Cardiac septum (tissue), 1 donor: ENCODE measurements at regions of chr15 and their contacts with region 1.

Region 1: DNA sequence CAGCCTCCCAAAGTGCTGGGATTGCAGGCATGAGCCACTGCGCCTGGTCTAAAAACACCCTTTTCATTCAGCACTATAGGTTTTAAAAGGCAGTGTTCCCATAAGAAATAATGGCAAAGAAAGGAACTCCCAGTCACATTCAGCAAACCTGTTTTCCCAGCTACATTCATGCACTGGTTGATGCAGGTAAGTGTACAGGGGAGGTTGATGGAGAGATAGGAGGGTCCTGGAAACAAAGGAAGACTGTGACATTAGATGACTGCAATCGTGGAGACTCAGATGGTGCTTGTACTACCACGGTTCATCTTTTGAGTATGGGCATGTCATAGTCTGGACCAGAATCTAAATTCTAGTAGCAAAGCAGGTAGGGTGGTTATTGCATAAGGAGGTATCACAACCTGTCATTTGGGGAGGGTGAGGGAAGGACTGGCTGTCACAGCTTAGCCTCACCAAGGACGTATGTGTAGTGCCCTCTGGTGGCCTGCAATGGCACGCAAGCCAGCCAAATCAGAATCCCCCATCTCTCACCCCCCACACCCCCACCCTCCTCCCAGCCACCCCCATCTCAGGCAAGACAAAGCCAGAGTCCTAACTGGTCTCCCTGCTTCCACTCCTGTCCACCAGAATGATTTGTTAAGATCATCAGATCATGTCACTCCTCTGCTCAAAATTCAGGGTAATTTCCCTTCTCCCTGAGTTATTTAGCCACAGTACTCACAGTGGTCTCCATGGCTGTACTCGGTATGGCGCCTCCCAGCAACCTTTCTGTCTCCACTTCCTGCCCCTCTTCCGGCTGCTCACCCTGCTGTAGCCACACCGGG is 28.8 kb upstream of the UBL7 start:
- DNase-seq: no peak

Region 2: GRCh38 chr15:74373731-74374647 is 115.7 kb before region 1 on chr15:
- intact Hi-C with region 1: loop called (anchors 2 kb)
- DNase-seq: peak; percentile 95

Region 3: GRCh38 chr15:74531144-74531811 is 41.5 kb after region 1 on chr15:
- intact Hi-C with region 1: no loop called
- DNase-seq: no peak

Region 4: DNA sequence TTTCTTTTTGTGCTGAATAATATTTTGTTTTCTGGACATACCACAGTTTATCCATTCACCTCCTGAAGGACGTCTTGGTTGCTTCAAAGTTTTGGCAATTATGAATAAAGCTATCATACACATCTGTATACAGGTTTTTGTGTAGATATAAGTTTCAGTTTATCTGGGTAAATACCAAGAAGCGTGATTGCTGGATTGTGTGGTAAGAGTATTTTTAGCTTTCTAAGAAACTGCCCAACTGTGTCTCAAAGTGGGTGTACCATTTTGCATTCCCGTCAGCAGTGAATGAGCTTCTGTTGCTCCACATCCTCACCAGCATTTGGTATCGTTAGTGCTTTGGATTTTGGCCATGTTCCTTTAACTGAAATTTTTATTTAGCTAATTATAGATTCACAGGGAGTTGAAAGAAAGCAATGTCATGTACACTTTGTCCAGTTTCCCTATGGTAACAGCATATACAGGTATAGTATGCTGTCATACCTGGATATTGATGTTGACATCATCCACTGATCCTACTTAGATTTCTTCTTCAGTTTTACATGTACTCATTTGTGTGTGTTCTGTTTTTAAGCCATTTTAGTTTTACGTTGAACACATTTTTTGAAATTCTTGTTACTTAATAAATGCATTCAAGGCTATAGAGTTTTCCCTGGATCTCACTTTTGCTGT is 63.2 kb after region 1 on chr15:
- intact Hi-C with region 1: no loop called
- DNase-seq: no peak